ENCODE measurements at regions of chr12 and their contacts with region 1.

Region 1: DNA sequence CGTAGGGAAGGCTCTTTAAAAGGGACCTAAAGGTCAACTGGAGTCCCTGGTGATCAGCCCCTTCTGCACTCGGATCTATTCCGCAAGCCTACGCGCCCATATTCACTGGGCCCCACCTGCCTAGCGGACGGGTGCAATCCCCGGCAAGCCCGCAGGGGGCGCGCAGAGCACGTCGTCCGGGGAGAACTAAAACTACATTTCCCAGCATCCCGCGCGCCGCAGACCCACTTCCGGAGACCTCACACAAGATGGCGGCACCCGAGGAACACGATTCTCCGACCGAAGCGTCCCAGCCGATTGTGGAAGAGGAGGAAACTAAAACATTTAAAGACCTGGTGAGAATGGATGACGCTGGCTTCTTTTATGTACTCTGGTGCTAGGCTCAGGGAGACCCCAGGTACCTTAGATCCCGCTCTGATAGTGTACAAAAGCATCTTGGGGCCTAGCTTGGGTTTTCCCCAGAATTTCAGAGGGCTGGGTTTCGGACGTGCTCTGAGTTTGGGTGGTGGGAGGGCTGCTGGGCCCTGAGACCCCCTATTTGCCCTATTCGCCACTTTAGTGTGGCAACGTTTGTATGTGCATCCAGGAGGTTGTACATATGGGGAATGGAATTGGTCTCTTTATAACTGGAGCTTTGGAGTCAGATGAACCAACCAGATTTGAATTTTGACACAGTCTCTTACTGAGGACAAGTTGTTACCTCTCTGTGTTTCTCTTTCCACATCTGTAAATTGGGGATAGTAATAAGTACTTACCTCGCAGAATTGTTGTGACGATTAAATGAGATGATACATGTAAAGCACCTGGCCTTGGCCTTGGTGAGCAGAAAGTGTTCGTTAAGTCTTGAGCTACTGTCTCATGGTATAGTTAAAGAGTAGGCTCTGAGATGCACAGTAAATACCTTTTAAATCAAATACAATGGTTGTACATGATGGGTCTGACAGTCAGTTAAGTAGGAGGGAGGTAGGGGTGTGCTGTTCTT is at the start of gene DDX47:
- DNase-seq: no peak
- H3K4me3 ChIP-seq: peak within 1 kb of the TSS; percentile 86
- CTCF ChIP-seq: peak; percentile 98

Region 2: GRCh38 chr12:12387501-12387900 is 425.9 kb before region 1 on chr12:
- CTCF ChIA-PET with region 1: no interaction called
- POLR2A ChIA-PET with region 1: no interaction called
- DNase-seq: no peak
- H3K4me3 ChIP-seq: no peak overlapping the region
- CTCF ChIP-seq: no peak

Region 3: DNA sequence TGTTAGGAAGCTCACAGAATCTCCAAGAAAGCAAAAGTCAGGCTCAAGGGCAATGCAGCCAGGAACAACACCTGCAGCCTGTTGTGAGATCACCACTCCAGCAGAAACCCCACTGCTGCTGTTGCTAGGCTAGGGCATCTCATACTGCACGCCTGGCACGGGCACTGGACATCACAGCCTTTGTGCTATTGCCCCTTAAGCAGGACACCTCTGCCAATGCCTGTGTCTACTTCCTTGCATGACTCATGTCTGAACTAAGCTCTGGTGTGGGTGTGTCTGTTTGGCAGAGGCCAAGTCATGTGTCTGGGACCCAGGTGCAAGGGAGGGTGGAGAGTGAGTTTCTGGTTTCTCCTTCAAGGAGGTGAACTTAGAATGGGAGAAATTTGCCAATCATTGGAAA is 10.2 kb before region 1 on chr12:
- CTCF ChIA-PET with region 1: interaction called, 25 read pairs
- POLR2A ChIA-PET with region 1: no interaction called
- DNase-seq: no peak
- H3K4me3 ChIP-seq: no peak overlapping the region
- CTCF ChIP-seq: no peak

Region 4: DNA sequence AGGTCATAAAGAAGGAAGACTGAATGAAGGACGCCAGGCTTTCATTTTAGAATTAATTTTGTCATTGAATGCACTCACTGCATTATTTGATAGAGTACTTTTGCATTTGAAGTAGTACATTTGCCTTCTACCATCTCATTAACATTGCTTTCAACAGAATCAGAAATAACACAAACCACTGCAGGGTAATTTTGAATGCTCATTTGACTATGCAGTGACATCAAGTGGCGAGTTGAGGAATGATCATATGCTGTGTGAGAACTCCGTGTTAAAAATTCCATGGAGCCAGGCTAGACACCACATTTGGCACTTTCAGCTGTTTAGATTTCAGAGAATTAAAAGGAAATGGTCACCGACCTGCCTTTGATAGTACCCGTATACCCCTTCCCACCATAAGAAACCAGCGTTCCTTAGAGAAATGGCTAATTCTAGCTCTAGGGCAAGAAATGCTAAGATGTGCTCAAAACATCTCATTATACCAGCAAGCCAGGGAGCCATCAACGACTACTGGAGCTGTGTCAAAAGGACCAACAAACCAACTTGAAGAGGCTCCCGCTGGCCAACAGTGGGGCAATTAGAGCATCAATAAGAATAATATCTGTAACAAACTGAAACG is 170.1 kb after region 1 on chr12:
- CTCF ChIA-PET with region 1: interaction called, 28 read pairs
- POLR2A ChIA-PET with region 1: interaction called, 3 read pairs
- DNase-seq: no peak
- H3K4me3 ChIP-seq: no peak overlapping the region
- CTCF ChIP-seq: peak; percentile 69